ENCODE measurements at regions of chr6 and their contacts with region 1.

Region 1: DNA sequence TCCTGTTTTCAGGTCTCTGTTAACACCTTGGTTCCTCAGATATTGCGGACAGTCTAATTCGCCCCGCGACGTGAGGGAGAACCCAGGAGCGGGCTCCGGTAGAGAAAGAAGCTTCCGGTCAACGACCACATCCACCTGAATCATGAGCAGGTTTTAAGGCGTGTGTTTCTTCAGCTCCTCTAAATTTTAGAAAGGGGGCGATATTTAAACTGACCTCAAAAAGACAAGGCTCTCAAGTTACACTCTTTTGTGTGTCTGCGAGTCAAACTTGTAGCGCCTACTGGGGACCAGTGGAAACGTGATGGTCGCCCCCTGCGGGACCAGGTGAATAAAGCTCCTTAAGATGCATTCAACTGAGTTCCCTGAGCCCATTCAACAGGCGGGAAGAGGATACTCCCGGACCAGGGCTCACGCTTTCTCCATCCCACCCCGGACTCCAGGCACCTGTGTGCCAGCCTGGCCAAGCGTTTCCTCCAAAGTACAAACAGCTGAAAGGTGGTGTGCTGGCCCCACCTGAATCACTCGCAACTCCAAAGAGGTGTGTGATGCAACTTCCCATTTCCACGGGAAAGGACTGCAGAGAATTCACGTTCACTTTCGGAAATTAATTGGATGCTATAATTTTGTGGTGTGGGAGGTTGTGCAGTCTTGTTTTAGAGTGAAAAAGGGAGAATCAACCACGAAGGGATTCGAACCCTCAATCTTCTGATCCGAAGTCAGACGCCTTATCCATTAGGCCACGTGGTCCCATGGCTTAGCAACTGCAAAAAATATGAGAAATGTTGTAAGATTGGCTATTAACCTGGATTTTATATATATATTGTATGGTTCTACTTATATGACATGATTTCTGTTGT is 17.0 kb downstream of the GPX5 start:
- DNase-seq: peak; percentile 25 to 76 (median 68)
- ATAC-seq: peak; percentile 75
- H3K4me3 ChIP-seq: peak overlapping the region; percentile 62
- H3K4me3 Mint-ChIP-seq: peak overlapping the region; percentile 79 to 94 (median 88)
- H3K27ac ChIP-seq: no peak overlapping the region
- H3K27ac Mint-ChIP-seq: peak overlapping the region; percentile 26 to 92 (median 85)
- H3K4me1 ChIP-seq: peaks cover 0 to 12% of the 10 kb centered on the region in 2 donors
- H3K4me1 Mint-ChIP-seq: peaks cover 15 to 46% (median 37%) of the 10 kb centered on the region in 7 donors
- H3K27me3 ChIP-seq: peaks cover 0 to 11% of the 10 kb centered on the region in 2 donors
- H3K27me3 Mint-ChIP-seq: peaks cover 0 to 84% (median 51%) of the 10 kb centered on the region in 5 donors

Region 2: DNA sequence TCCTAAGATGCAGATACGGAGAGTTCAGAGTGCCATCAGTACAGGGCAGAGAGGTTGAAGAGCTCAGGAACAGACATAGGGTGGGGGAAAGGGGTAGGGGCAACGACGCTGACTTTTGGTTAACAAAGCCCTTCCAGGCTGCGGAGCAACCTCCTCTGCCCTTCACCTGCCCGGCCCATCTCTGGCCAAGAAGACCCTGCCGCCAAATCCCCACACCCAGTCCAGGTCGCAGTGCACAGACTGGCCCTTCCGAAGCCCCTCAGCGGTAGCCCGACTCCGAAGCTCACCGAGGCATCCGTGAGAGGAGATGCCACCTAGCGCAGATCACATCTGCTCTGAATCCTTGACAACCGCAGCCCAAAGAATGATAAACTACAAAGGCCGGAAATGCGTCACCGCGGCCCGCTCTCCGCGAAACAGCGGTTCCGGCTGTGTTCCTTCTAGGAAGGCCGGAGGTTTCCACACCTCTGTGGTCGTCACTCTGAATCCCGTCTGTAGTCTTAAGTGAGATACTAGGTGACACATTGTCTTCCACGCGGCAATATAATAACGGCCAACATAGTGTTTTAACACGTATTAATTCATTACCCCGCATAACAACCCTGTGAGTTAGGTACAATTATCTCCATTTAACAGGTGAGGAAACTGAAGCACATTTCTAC is 99.4 kb before region 1 on chr6 and contains the start of gene ZSCAN23:
- CTCF ChIA-PET with region 1: interaction called, 6 read pairs
- POLR2A ChIA-PET with region 1: no interaction called
- intact Hi-C with region 1: loop called in 1 of 2 experiments (anchors 2 kb)
- DNase-seq: peak; percentile 59 to 93 (median 88)
- ATAC-seq: peak; percentile 96
- H3K4me3 ChIP-seq: peak within 1 kb of the TSS; percentile 76
- H3K4me3 Mint-ChIP-seq: peak within 1 kb of the TSS; percentile 86 to 98 (median 96)
- H3K27ac ChIP-seq: peak within 1 kb of the TSS; percentile 60
- H3K27ac Mint-ChIP-seq: peak within 1 kb of the TSS; percentile 76 to 97 (median 93)
- H3K4me1 ChIP-seq: peaks cover 13 to 16% of the 10 kb centered on the region in 2 donors
- H3K4me1 Mint-ChIP-seq: peaks cover 15 to 38% (median 32%) of the 10 kb centered on the region in 7 donors
- H3K27me3 ChIP-seq: peaks cover 0 to 6% of the 10 kb centered on the region in 2 donors
- H3K27me3 Mint-ChIP-seq: peaks cover 9 to 36% (median 30%) of the 10 kb centered on the region in 5 donors
- total RNA-seq, gene ZSCAN23: 1.4 to 3.4 (median 2.4) TPM

Region 3: DNA sequence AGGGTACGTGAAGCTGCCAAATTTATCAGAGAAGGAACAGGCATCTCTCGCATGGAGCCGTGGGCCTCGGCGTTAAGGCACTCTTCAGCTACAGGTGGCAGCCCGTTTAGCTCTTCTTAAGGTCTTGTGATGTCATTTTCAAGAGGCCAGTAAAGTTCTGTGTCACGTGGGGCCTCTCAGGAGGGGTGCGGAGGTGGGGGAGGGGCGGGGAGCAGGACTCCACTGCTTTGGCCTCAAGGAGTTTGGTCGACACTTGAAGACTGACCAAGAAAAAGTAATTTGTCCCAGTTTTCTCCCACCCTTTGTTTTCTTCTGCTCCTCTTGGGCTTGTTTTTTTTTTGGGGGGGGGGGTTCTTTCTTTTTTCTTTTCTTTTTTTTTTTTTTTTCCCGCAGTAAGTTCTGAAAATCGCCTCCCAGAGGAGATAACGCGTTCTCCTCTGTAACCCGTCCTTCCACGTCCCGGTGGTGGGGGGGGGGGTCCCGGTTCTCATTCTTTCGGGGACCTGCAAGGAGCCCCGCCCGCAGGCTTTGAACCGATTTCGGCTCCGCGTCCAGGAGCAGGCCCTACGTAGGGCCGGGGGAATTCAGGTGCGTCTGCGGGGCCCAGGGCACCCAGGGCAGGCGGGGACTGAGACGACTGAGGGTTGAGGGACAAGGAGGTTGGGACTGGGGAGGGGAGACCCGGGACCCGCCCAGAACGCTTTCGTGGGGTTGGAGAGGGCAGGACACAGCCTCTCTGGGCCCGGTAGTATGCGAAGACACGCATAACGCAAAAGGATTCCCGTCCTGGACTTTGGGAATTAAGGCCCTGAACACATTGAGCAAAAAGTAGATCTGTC is 53.1 kb before region 1 on chr6:
- CTCF ChIA-PET with region 1: interaction called, 11 read pairs
- POLR2A ChIA-PET with region 1: no interaction called
- intact Hi-C with region 1: loop called (anchors 1 to 2 kb)
- DNase-seq: peak; percentile 25 to 49 (median 39)
- ATAC-seq: peak; percentile 75
- H3K4me3 ChIP-seq: peak overlapping the region; percentile 42
- H3K4me3 Mint-ChIP-seq: peak overlapping the region; percentile 78 to 88 (median 83)
- H3K27ac ChIP-seq: peak overlapping the region; percentile 67
- H3K27ac Mint-ChIP-seq: peak overlapping the region; percentile 75 to 90 (median 82)
- H3K4me1 ChIP-seq: peaks cover 0 to 14% of the 10 kb centered on the region in 2 donors
- H3K4me1 Mint-ChIP-seq: peaks cover 16 to 32% (median 20%) of the 10 kb centered on the region in 7 donors
- H3K27me3 ChIP-seq: peaks cover 0 to 4% of the 10 kb centered on the region in 2 donors
- H3K27me3 Mint-ChIP-seq: peaks cover 17 to 73% (median 63%) of the 10 kb centered on the region in 5 donors

Region 4: DNA sequence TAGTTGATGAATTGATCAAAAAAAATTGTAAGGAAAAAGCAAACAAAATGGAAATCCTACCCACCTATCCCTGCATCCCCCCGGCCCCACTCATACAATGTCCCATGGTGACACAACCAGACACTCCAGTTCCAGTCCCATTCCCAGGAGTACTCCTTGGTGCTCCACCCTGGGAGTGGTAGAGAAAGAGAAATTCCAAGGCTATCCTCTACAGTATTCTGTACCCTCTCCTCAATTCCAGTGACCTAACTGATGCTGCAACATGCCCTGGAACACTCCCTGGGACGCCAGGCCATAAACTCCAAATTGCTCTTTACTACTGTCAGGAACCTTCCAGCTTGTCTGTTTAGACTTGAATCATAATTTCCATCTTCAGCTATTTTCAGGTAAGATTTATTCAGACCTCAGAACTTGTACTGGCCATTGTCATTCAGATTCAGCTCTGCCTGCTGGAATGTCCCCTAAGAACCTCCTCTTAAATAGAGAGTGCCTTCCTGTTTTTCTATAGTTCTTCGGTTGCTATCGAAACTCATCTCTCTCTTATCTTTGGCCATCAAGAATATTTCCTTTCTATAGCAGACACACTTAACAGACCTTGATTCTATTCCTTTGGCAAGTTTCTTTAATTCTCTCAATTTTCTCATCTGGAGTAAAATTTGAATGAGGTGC is 35.7 kb before region 1 on chr6:
- CTCF ChIA-PET with region 1: interaction called, 3 read pairs
- POLR2A ChIA-PET with region 1: interaction called, 4 read pairs
- intact Hi-C with region 1: loop called (anchors 1 to 5 kb)
- DNase-seq: peak in 4 of 9 donors; percentile 6 to 17 (median 10)
- ATAC-seq: peak; percentile 37
- H3K4me3 ChIP-seq: no peak overlapping the region
- H3K4me3 Mint-ChIP-seq: peak overlapping the region in 9 of 10 donors; percentile 14 to 70 (median 56)
- H3K27ac ChIP-seq: no peak overlapping the region
- H3K27ac Mint-ChIP-seq: peak overlapping the region; percentile 10 to 82 (median 64)
- H3K4me1 ChIP-seq: no peaks in the 10 kb centered on the region
- H3K4me1 Mint-ChIP-seq: peaks cover 11 to 28% (median 20%) of the 10 kb centered on the region in 7 donors
- H3K27me3 ChIP-seq: no peaks in the 10 kb centered on the region
- H3K27me3 Mint-ChIP-seq: peaks cover 0 to 16% (median 9%) of the 10 kb centered on the region in 5 donors

Region 5: DNA sequence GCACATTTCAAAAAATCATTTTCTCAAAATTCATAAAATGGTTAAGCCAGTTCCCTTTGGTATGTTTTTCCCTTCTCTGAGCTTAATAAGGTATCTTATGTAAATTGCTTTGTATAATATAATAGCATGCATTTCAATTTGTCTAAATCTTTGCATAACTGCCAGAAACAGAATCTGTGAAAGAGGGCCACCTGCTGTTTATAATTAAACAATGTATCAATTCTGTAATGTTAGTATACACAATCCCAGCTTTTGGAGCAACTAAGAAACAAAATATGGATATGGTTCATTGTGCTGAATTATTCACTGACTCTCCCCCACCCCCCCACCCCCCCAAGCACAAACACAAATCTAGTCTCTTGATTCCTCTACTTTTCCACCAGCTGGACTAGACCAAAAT is 37.8 kb after region 1 on chr6:
- CTCF ChIA-PET with region 1: interaction called, 4 read pairs
- POLR2A ChIA-PET with region 1: no interaction called
- intact Hi-C with region 1: loop called (anchors 2 to 5 kb)
- DNase-seq: peak in 2 of 9 donors; percentile 16 to 24
- ATAC-seq: no peak
- H3K4me3 ChIP-seq: no peak overlapping the region
- H3K4me3 Mint-ChIP-seq: no peak overlapping the region
- H3K27ac ChIP-seq: no peak overlapping the region
- H3K27ac Mint-ChIP-seq: no peak overlapping the region
- H3K4me1 ChIP-seq: no peaks in the 10 kb centered on the region
- H3K4me1 Mint-ChIP-seq: no peaks in the 10 kb centered on the region
- H3K27me3 ChIP-seq: no peaks in the 10 kb centered on the region
- H3K27me3 Mint-ChIP-seq: peaks cover 0 to 43% (median 25%) of the 10 kb centered on the region in 5 donors

Region 6: DNA sequence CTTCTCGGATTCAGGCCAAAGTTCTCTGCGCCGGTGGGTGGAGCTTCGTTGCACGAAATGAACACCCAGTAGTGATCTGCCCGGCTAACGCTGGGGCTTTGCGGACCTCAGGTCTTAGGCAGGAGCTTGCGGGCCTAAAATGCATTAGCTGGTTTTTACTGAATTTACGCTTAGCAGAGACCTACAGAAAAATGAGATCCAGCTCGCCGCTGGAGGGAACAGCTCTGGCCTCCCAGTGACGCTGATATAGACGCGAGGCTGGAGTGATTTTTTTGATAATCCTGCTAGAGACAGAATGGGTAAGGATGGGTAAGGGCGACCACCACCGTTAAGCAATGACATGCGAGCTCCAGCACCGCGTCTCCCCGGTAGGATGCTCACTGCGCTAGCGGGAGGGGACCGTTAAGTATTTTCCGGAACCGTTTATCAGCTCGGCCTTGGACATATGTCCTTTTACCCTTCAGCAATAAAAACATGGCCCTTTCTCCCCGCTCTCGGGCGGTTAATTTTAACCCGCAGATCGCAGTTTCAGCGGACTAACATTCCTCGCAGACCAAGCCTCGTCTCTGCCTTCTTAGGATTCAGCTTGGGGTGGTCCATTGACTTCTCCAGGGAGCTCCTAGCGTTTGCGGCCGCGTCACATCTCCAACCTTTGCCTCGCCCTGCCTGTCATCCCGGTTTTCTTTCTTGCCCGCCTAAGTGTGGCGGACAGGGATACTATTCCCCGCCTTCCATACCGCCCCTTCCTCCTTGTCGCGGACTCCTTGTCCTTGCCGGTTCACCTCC is 92.3 kb after region 1 on chr6:
- CTCF ChIA-PET with region 1: no interaction called
- POLR2A ChIA-PET with region 1: no interaction called
- intact Hi-C with region 1: no loop called
- DNase-seq: no peak
- ATAC-seq: no peak
- H3K4me3 ChIP-seq: no peak overlapping the region
- H3K4me3 Mint-ChIP-seq: peak overlapping the region; percentile 4 to 78 (median 42)
- H3K27ac ChIP-seq: no peak overlapping the region
- H3K27ac Mint-ChIP-seq: peak overlapping the region in 2 of 9 donors; percentile 35 to 78
- H3K4me1 ChIP-seq: peaks cover 0 to 3% of the 10 kb centered on the region in 2 donors
- H3K4me1 Mint-ChIP-seq: peaks cover 5 to 27% (median 15%) of the 10 kb centered on the region in 7 donors
- H3K27me3 ChIP-seq: peaks cover 7 to 20% of the 10 kb centered on the region in 2 donors
- H3K27me3 Mint-ChIP-seq: peaks cover 69 to 92% (median 88%) of the 10 kb centered on the region in 5 donors

Region 7: DNA sequence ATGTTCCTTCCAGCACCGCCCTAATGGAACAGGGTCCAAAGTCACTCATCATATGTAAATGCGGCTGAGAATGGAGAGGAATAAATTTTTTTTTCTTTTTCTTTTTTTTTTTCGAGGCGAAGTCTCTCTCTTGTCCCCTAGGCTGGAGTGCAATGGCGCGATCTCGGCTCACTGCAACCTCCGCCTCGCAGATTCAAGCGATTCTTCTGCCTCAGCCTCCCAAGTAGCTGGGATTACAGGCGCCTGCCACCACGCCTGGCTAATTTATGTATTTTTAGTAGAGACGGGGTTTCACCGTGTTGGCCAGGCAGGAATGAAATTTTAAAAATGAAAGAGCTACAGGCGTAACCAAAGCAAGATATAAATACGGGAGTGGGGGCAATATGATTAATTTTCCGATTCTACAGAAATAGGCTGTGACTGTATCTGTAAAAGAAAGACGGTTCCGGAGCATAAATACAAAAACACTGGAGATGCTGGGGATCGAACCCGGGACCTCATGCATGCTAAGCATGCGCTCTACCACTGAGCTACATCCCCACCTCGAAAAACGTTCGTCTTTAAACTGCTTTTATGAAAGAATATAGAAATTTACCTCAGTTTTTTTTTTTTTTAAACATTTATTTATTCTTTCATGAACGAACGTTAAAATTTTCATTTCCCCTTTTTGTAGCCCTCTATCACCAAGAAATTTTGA is 115.2 kb after region 1 on chr6:
- CTCF ChIA-PET with region 1: no interaction called
- POLR2A ChIA-PET with region 1: no interaction called
- intact Hi-C with region 1: loop called in 1 of 2 experiments (anchors 5 kb)
- DNase-seq: peak in 8 of 9 donors; percentile 37 to 60 (median 56)
- ATAC-seq: no peak
- H3K4me3 ChIP-seq: peak overlapping the region; percentile 45
- H3K4me3 Mint-ChIP-seq: peak overlapping the region; percentile 67 to 91 (median 83)
- H3K27ac ChIP-seq: no peak overlapping the region
- H3K27ac Mint-ChIP-seq: peak overlapping the region; percentile 43 to 86 (median 69)
- H3K4me1 ChIP-seq: peaks cover 6 to 13% of the 10 kb centered on the region in 2 donors
- H3K4me1 Mint-ChIP-seq: peaks cover 15 to 30% (median 23%) of the 10 kb centered on the region in 7 donors
- H3K27me3 ChIP-seq: peaks cover 9 to 20% of the 10 kb centered on the region in 2 donors
- H3K27me3 Mint-ChIP-seq: peaks cover 58 to 72% (median 64%) of the 10 kb centered on the region in 5 donors

Region 8: DNA sequence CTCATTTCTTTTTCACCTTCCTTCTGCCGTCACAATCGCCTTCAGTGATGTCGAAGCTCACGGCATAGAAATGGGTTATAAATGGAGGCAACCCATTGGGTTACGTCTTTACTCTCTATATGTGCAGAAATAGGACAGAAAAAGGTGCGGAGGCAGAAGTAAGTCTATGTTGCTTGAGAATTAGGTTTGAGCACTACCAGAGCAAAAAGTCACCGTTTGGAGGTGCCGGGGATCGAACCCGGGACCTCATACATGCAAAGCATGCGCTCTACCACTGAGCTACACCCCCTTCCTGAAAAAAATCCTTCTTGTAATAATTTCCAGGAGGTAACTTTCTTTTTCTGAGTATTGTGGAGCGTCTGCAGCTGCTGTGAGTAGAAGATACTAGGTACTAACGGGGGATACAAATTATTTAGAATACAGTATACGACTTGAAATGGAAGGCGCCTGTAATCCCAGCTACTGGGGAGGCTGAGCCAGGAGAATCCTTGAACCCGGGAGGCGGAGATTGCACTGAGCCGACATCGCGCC is 246.9 kb after region 1 on chr6:
- CTCF ChIA-PET with region 1: no interaction called
- POLR2A ChIA-PET with region 1: no interaction called
- intact Hi-C with region 1: no loop called
- DNase-seq: no peak
- ATAC-seq: no peak
- H3K4me3 ChIP-seq: no peak overlapping the region
- H3K4me3 Mint-ChIP-seq: peak overlapping the region in 8 of 10 donors; percentile 25 to 60 (median 48)
- H3K27ac ChIP-seq: no peak overlapping the region
- H3K27ac Mint-ChIP-seq: peak overlapping the region in 6 of 9 donors; percentile 37 to 73 (median 50)
- H3K4me1 ChIP-seq: no peaks in the 10 kb centered on the region
- H3K4me1 Mint-ChIP-seq: peaks cover 4 to 21% (median 12%) of the 10 kb centered on the region in 7 donors
- H3K27me3 ChIP-seq: peaks cover 11 to 46% of the 10 kb centered on the region in 2 donors
- H3K27me3 Mint-ChIP-seq: peaks cover 89 to 97% (median 93%) of the 10 kb centered on the region in 5 donors

Measured in naive thymus-derived CD4-positive, alpha-beta T cell (primary cell).